Uterus (tissue), 4 donors: ENCODE measurements at regions of chr4 and their contacts with region 1.

Region 1: GRCh38 chr4:184955651-184956050 is 62.6 kb upstream of the HELT start:
- DNase-seq: no peak
- H3K4me3 ChIP-seq: no peak overlapping the region
- H3K27ac ChIP-seq: no peak overlapping the region
- H3K4me1 ChIP-seq: no peaks in the 10 kb centered on the region
- H3K27me3 ChIP-seq: no peaks in the 10 kb centered on the region
- CTCF ChIP-seq: no peak
- POLR2A ChIP-seq: no peak

Region 2: DNA sequence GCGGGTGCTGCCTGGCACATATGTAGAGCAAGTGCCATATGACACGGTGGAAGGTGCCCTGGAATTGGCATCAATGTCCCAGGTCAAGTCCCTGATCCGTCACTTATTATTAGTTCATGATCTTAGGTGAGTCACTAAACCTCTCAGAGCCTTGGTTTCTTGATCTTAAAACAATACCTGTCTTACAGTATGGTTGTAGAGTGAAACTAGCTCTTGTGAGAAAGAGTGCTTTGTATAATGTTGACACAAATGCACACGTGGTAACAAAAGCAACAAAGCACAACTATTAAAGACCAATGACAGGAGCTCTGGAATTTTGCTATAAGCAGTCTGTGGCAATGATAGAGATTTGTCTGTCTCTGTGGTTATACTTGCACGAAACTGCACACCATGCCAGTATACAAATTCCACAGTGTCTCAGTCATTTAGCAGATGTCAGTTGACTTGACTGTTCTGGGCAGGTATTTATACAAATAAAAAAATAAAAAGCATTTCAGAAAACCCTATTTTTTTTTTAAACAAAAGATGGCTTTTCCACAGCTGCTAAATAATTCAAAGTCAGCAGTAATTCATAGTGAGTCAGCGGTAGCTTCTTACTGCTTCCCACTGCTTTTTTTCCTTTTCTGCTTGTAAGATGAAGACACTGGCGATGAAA is 110.2 kb before region 1 on chr4:
- intact Hi-C with region 1: no loop called
- DNase-seq: no peak
- H3K4me3 ChIP-seq: no peak overlapping the region
- H3K27ac ChIP-seq: no peak overlapping the region
- H3K4me1 ChIP-seq: no peaks in the 10 kb centered on the region
- H3K27me3 ChIP-seq: no peaks in the 10 kb centered on the region
- CTCF ChIP-seq: no peak
- POLR2A ChIP-seq: no peak

Region 3: DNA sequence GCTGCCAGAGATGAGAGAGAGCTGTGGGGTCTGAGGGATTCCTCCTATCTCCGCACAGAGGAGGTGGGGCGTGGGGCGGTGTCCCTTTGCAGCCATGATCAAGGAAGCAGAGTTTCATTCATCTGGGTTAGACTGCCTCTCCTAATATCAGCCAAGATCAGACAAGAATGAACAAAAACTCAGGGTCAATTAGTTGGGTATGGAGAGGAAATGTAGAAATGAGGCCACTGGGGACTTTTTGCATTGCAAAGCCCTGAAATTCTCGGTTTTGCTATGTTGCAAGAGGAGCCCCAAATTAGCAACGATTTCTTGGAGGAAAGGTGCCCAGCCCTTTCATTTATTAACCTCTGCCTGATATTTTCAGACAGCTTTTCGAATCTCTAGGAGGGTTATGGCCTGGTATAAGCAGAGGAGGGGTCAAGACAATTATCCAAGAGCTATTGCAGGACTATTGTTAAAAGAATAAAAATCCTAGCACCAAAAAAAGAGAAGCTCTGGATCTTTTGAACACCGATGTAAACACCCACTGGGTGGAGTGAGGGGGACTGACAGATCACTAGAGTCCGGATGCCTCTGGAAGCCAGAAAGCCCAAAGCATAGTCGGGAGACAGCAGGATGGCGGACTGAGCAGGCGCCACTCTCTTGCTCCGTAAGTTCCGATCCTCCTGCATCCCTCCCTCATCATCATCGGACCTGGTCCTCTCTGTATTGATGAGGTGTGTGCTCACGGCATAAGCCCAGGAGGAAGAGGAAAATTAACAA is 95.5 kb before region 1 on chr4:
- intact Hi-C with region 1: no loop called
- DNase-seq: no peak
- H3K4me3 ChIP-seq: no peak overlapping the region
- H3K27ac ChIP-seq: no peak overlapping the region
- H3K4me1 ChIP-seq: no peaks in the 10 kb centered on the region
- H3K27me3 ChIP-seq: no peaks in the 10 kb centered on the region
- CTCF ChIP-seq: no peak
- POLR2A ChIP-seq: no peak

Region 4: DNA sequence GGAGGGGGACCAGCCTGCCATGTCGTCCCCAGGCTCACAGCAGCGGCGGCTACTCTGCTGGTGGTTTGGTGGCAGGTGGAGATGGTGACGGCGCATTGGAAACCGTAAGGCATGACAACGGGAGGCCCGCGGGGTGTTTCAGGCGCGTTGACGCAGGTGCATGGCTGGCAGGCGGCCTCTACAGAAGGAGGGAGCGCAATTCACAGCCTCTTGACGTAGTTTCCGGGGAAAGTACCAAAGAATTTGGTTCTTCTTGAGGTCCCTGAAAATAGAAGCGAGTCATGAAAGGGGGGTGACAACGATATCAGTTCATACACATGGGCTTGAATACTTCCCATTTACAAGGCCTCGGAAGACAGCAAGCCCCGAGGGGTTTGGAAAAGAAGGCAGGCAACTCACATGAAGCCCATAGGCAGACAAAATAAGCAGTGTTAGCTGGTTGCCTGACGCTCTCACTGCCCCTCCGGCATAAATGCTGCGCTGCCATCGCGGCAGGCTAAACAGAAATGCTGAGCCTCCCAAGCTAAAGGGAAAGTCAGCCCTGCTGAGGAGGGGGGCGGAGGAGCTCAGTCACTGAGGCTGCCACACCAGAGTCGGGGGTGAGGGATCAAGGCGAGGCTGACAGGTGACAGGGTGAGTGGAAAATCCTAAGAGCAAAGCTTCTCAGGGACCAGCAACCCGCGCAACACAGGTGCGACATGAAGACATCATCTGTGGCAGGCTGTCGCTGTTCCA is 631.9 kb after region 1 on chr4:
- intact Hi-C with region 1: no loop called
- DNase-seq: no peak
- H3K4me3 ChIP-seq: no peak overlapping the region
- H3K27ac ChIP-seq: no peak overlapping the region
- H3K4me1 ChIP-seq: no peaks in the 10 kb centered on the region
- H3K27me3 ChIP-seq: no peaks in the 10 kb centered on the region
- CTCF ChIP-seq: no peak
- POLR2A ChIP-seq: no peak

Region 5: GRCh38 chr4:185742766-185743165 is 787.1 kb after region 1 on chr4:
- intact Hi-C with region 1: loop called (anchors 10 kb)
- DNase-seq: no peak
- H3K4me3 ChIP-seq: no peak overlapping the region
- H3K27ac ChIP-seq: no peak overlapping the region
- H3K4me1 ChIP-seq: no peaks in the 10 kb centered on the region
- H3K27me3 ChIP-seq: no peaks in the 10 kb centered on the region
- CTCF ChIP-seq: no peak
- POLR2A ChIP-seq: no peak